Aorta (tissue), 5 donors: ENCODE measurements at regions of chr10 and their contacts with region 1.

Region 1: DNA sequence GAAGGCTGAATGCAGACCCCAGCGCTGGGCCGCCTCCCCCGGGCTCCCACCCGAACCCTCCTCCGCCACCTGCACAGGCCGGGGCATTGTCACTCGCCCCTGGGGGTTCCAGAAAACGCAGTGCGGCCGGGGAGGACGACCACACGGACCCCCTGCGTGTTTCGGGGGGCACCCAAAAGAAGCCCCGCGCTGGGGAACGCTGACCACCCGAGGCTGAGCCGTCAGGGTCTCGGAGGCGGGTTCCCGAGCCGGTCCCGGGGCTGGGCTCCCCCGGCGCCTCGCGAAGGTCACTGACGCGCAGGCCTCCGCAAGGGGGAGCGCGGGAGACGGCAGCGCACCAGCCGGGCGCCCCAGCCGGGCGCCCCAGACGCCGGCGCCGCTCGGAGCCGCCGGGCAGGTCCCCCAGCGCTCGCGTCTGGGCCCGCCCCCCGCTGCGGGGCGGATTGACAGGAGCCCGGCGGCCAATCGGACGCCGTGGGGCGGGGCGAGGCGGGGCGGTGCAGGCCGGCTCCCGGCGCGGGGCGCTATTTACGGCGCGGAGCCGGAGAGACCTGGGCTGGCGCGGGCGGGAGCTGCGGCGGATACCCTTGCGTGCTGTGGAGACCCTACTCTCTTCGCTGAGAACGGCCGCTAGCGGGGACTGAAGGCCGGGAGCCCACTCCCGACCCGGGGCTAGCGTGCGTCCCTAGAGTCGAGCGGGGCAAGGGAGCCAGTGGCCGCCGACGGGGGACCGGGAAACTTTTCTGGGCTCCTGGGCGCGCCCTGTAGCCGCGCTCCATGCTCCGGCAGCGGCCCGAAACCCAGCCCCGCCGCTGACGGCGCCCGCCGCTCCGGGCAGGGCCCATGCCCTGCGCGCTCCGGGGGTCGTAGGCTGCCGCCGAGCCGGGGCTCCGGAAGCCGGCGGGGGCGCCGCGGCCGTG is at the start of gene BAMBI:
- DNase-seq: peak; percentile 94 to 96
- ATAC-seq: peak; percentile 98
- H3K4me3 ChIP-seq: peak within 1 kb of the TSS; percentile 96
- H3K27ac ChIP-seq: peak within 1 kb of the TSS; percentile 29 to 85
- H3K4me1 ChIP-seq: no peaks in the 10 kb centered on the region
- H3K27me3 ChIP-seq: no peaks in the 10 kb centered on the region
- total RNA-seq, gene BAMBI: 18.3 to 34.5 TPM

Region 2: GRCh38 chr10:28719789-28720436 is 42.7 kb after region 1 on chr10:
- intact Hi-C with region 1: loop called in 1 of 2 experiments (anchors 5 kb)
- DNase-seq: no peak
- ATAC-seq: no peak
- H3K4me3 ChIP-seq: no peak overlapping the region
- H3K27ac ChIP-seq: no peak overlapping the region
- H3K4me1 ChIP-seq: peaks cover 2% of the 10 kb centered on the region in 2 donors
- H3K27me3 ChIP-seq: no peaks in the 10 kb centered on the region

Region 3: GRCh38 chr10:28734941-28735759 is 57.9 kb after region 1 on chr10:
- intact Hi-C with region 1: no loop called
- DNase-seq: peak in 1 of 2 donors; percentile 62
- ATAC-seq: peak; percentile 72
- H3K4me3 ChIP-seq: no peak overlapping the region
- H3K27ac ChIP-seq: peak overlapping the region in 1 of 2 donors; percentile 17
- H3K4me1 ChIP-seq: no peaks in the 10 kb centered on the region
- H3K27me3 ChIP-seq: no peaks in the 10 kb centered on the region

Region 4: DNA sequence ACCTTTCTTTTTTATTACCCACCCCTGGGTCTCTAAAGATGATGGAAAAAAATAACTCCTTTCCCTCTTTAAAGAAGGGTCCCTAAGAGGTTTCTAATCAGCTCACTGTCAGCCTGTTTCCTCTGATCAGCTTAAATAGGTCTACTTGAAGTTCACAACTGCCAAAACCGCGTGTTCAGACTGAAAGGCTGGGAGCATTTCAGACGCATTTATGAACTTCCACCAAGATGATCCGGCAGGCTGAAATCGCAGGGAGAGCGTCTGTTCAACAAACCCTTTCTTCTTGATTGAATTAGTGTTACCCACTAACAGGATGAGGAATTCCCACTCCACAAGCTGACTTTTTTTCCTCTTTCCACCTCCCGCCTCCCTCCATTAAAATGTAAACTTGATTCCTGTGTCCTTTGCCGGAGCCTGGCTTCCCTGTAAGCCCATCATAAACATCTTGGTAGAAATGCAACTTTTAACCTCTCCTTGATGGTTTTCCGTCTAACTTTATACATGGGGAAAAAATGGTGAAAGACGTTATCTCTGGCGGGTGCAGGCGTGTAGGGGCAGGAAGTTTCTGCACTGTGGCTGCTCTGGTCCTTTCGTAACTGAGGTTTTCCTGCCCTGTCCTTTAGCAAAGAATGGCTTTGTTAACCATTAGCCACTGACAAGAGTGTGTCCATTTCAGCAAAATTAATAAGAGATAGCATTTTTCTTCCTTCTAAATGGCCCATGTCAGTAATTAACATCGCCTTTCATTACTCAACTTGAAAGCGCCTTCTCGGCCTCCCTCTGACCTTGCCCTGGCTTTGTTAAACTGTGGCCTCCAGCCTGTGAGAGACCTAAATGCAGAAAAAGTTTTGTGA is 130.8 kb after region 1 on chr10:
- intact Hi-C with region 1: loop called in 1 of 2 experiments (anchors 5 kb)
- DNase-seq: no peak
- ATAC-seq: peak; percentile 64
- H3K4me3 ChIP-seq: no peak overlapping the region
- H3K27ac ChIP-seq: peak overlapping the region; percentile 69 to 95
- H3K4me1 ChIP-seq: peaks cover 0 to 3% of the 10 kb centered on the region in 2 donors
- H3K27me3 ChIP-seq: no peaks in the 10 kb centered on the region

Region 5: DNA sequence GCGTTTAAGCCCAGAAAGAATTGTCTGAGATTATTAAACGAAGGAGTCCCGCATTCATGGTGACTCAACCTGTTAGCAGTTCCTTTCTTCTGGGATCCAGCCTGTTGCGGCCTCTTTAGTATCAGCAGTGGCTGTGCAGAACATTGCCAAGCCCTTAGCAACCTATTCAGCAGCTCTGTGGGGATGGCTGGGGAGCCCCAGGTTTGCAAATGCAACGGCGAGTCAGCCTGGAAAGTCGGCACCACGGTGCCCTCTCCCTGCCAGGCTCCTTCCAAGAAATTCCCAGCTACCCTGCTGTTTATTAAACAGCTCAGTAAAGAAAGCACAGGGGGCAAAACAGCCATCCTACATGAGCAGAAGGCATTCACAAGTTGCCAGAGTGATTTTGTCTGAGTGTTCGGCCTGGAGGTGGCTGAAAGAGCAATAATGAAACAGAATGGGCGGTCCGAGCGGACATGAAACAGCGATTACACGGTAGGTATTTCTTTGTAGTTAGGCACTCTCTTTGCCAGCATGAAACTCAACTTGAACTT is 198.4 kb after region 1 on chr10:
- intact Hi-C with region 1: loop called in 1 of 2 experiments (anchors 5 kb)
- DNase-seq: no peak
- ATAC-seq: no peak
- H3K4me3 ChIP-seq: no peak overlapping the region
- H3K27ac ChIP-seq: no peak overlapping the region
- H3K4me1 ChIP-seq: no peaks in the 10 kb centered on the region
- H3K27me3 ChIP-seq: no peaks in the 10 kb centered on the region

Region 6: DNA sequence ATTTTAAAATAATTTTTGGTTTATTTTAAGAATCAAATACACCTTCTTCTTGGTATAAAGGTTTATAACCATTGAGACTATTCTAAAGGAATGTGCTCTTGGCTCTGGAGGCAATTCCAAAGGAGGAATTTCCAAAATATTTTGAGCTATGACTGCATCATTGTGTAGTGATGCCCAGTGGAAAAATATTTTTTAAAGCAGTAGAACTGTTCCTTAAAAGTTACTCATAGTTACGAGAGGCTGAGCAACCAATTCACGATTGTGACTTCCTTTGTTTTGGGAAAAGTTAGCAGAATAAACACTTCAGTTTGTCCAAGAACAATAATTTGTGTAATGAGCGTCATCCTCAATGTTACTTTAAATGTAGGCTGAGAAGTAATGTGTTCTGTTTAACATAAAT is 233.7 kb after region 1 on chr10:
- intact Hi-C with region 1: loop called (anchors 2 to 10 kb)
- DNase-seq: no peak
- ATAC-seq: peak; percentile 76
- H3K4me3 ChIP-seq: no peak overlapping the region
- H3K27ac ChIP-seq: peak overlapping the region in 1 of 2 donors; percentile 93
- H3K4me1 ChIP-seq: peaks cover 1 to 15% of the 10 kb centered on the region in 2 donors
- H3K27me3 ChIP-seq: no peaks in the 10 kb centered on the region

Region 7: DNA sequence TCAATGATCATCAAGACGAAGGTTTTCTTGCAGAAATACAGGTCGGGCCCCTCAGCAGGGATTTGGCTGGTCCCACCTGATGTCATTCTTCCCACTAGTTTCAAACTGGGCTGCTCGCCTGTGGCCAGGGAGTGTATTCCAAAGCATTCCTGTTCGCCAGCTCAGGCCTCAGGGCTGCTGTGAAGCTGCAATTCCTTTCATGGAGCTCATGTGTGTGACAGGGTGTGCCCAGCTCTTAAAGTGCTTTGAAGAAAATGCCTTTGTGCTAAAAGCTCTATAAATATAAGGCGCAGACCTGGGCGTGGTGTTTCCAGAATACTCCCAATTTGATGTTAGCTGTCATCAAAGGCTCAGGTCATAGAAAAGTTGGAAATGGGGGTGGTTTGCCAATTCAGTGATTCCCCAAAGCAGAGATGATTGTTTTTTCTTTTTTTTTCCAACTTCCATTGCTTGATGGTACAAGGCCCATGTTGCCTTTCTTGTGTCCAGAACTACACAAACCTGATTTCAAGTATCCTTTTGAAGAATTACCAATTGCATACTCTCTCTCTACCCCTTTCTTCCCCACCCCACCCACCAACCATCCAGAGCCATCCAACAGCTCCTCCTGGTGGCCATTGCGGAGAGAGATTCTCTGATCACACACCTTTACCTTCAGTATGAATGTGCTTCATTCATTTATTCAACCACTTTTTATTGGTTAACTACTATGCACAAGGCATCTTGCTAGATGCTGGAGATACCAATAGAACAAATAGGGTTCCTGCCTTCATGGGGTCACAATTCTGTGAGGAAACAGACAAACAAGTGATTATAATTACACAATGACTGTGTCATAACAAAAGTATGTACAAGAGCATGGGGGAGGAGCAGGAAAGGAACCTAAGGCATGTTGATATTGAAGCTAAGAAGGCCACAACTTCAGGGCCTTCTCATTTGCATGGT is 314.4 kb after region 1 on chr10:
- intact Hi-C with region 1: loop called (anchors 1 to 5 kb)
- DNase-seq: peak; percentile 80 to 86
- ATAC-seq: peak; percentile 74
- H3K4me3 ChIP-seq: no peak overlapping the region
- H3K27ac ChIP-seq: peak overlapping the region in 1 of 2 donors; percentile 17
- H3K4me1 ChIP-seq: no peaks in the 10 kb centered on the region
- H3K27me3 ChIP-seq: no peaks in the 10 kb centered on the region